ENCODE measurements at regions of chr11 and their contacts with region 1.

Region 1: DNA sequence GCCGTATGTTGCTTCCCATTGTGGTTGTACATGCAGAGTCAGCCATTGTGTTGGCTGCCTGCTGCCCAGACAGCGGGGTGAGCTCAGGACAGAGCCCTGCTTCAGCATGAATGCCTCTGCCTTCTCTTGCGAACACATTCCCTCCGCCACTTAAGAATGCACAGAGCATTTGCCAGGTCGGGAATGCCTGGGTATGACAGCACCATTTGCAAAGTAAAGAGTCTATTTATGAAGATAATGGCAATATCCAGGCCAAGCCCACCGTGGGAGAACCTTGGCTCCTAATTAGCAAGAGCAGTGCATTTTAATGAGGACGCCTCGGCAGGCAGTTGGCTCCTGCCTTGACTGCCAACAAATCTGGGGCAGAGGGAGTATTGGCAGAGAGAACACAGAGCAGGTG is 62.5 kb upstream of the SORL1 start:
- DNase-seq: no peak
- ATAC-seq: no peak
- H3K4me3 ChIP-seq: no peak overlapping the region
- H3K27ac ChIP-seq: no peak overlapping the region
- H3K4me1 ChIP-seq: no peaks in the 10 kb centered on the region
- H3K27me3 ChIP-seq: peaks cover 2% of the 10 kb centered on the region
- CTCF ChIP-seq: no peak

Region 2: DNA sequence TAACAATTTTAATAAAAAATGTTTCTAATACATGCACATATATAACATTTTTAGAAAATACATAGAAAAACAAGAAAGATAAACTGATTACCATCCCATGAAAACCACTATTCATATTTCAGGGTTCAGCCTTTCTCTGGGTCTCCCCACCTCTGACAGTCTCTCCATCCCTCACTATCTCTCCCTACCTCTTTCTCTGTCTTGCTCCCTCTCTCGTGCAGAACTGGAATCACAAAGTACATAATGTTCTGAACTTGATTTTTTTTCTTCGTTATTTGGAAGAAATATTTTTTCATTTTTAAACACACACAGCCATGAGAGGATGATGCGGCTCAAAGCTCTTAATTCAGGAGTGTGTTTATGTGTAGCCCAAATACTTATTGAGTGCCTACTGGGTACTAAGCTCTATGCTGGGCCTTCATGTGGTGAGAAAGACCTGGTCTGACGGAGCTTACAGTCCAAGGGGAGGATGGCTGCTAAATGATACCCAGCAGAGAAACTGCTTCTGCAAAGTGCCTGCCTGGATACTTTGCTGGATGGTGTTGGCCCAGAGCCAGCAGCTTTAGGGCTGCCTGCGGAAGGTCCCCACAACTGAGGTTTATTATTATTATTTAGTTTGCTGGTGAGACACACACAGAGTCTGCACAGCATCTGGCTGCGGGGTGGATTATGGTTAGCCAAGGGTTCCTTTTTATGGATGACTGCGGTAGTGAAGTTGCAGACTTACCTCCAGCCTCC is 54.5 kb before region 1 on chr11:
- CTCF ChIA-PET with region 1: no interaction called
- POLR2A ChIA-PET with region 1: no interaction called
- in situ Hi-C with region 1: no loop called
- intact Hi-C with region 1: no loop called
- DNase-seq: no peak
- ATAC-seq: peak; percentile 48
- H3K4me3 ChIP-seq: no peak overlapping the region
- H3K27ac ChIP-seq: no peak overlapping the region
- H3K4me1 ChIP-seq: no peaks in the 10 kb centered on the region
- H3K27me3 ChIP-seq: peaks cover 16% of the 10 kb centered on the region
- CTCF ChIP-seq: peak; percentile 32; the same call in 1 of the 2 replicates

Region 3: GRCh38 chr11:121376130-121376529 is 13.5 kb before region 1 on chr11:
- CTCF ChIA-PET with region 1: no interaction called
- POLR2A ChIA-PET with region 1: interaction called, 10 read pairs
- in situ Hi-C with region 1: no loop called
- intact Hi-C with region 1: no loop called
- DNase-seq: no peak
- ATAC-seq: no peak
- H3K4me3 ChIP-seq: no peak overlapping the region
- H3K27ac ChIP-seq: no peak overlapping the region
- H3K4me1 ChIP-seq: no peaks in the 10 kb centered on the region
- H3K27me3 ChIP-seq: no peaks in the 10 kb centered on the region
- CTCF ChIP-seq: no peak

Region 4: GRCh38 chr11:121534131-121535093 is 144.8 kb after region 1 on chr11:
- CTCF ChIA-PET with region 1: no interaction called
- POLR2A ChIA-PET with region 1: no interaction called
- in situ Hi-C with region 1: no loop called
- intact Hi-C with region 1: no loop called
- DNase-seq: no peak
- ATAC-seq: no peak
- H3K4me3 ChIP-seq: no peak overlapping the region
- H3K27ac ChIP-seq: no peak overlapping the region
- H3K4me1 ChIP-seq: no peaks in the 10 kb centered on the region
- H3K27me3 ChIP-seq: no peaks in the 10 kb centered on the region
- CTCF ChIP-seq: peak; percentile 48

Region 5: GRCh38 chr11:121688055-121688491 is 298.4 kb after region 1 on chr11:
- CTCF ChIA-PET with region 1: no interaction called
- POLR2A ChIA-PET with region 1: no interaction called
- in situ Hi-C with region 1: no loop called
- intact Hi-C with region 1: no loop called
- DNase-seq: no peak
- ATAC-seq: no peak
- H3K4me3 ChIP-seq: no peak overlapping the region
- H3K27ac ChIP-seq: no peak overlapping the region
- H3K4me1 ChIP-seq: no peaks in the 10 kb centered on the region
- H3K27me3 ChIP-seq: no peaks in the 10 kb centered on the region
- CTCF ChIP-seq: no peak

Region 6: GRCh38 chr11:121841487-121842191 is 452.0 kb after region 1 on chr11:
- CTCF ChIA-PET with region 1: no interaction called
- POLR2A ChIA-PET with region 1: no interaction called
- in situ Hi-C with region 1: no loop called
- intact Hi-C with region 1: no loop called
- DNase-seq: no peak
- ATAC-seq: no peak
- H3K4me3 ChIP-seq: no peak overlapping the region
- H3K27ac ChIP-seq: no peak overlapping the region
- H3K4me1 ChIP-seq: no peaks in the 10 kb centered on the region
- H3K27me3 ChIP-seq: no peaks in the 10 kb centered on the region; the same call in 1 of the 2 replicates
- CTCF ChIP-seq: no peak

Measured in Panc1 (cell line).